ENCODE measurements at regions of chr9 and their contacts with region 1.

Region 1: GRCh38 chr9:110640736-110641135 is 27.9 kb upstream of the MUSK start:
- DNase-seq: no peak
- ATAC-seq: no peak

Region 2: GRCh38 chr9:110591526-110591925 is 49.2 kb before region 1 on chr9:
- intact Hi-C with region 1: no loop called
- DNase-seq: no peak
- ATAC-seq: no peak

Region 3: GRCh38 chr9:111298731-111299598 is 658.2 kb after region 1 on chr9:
- intact Hi-C with region 1: loop called (anchors 10 kb)
- DNase-seq: peak; percentile 83
- ATAC-seq: peak; percentile 96